ENCODE measurements at regions of chr16 and their contacts with region 1.

Region 1: DNA sequence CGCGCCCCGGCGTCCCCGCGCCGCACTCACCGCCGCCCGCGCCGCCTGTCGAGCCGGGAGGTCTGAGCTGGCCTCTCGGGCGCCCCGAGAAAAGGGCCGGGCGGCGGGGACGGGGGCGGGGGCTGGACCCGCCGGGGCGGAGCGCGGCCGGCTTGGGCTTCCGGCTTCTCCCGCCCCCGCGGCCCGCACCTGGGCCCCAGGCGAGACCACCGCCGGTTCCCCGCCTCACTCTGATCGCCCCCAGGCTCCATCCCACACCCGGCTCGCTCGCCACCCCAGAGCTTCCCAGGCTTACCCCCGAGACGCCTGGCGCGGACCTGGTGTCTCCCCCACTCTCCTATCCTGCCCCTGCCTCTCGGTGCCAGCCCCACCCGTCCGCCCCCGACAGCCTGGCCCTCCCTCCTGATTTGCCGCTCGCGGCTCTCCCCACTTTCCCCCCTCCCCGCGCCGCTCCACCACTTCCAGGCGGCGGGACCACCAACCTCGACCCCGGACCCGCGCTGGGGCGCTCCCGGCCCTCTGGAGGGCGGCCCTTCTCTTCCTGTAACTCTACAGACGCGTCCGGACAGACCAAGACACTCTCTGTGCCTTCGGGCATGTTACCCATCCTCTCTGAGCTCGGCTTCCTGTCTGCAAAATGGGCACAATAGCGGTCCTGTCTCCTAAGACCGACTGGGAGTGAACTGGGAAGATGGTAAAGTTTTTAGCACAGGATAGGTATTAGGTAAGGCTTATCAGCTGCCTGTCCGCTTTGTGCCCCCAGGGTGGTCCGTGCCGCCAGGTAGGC is at the start of gene LITAF:
- DNase-seq: peak; percentile 84
- total RNA-seq, gene LITAF: 40.5 TPM

Region 2: GRCh38 chr16:11629071-11629962 is 42.3 kb after region 1 on chr16:
- intact Hi-C with region 1: loop called (anchors 5 kb)
- DNase-seq: peak; percentile 83